Breast epithelium (tissue), 4 donors: ENCODE measurements at regions of chr2 and their contacts with region 1.

Region 1: GRCh38 chr2:230068016-230068650 is 591 bp downstream of the SLC16A14 start:
- DNase-seq: no peak
- H3K4me3 ChIP-seq: peak overlapping the region; percentile 60 to 77 (median 71)
- H3K27ac ChIP-seq: peak overlapping the region; percentile 62 to 91
- H3K4me1 ChIP-seq: no peaks in the 10 kb centered on the region
- H3K27me3 ChIP-seq: no peaks in the 10 kb centered on the region
- CTCF ChIP-seq: no peak
- POLR2A ChIP-seq: no peak

Region 2: DNA sequence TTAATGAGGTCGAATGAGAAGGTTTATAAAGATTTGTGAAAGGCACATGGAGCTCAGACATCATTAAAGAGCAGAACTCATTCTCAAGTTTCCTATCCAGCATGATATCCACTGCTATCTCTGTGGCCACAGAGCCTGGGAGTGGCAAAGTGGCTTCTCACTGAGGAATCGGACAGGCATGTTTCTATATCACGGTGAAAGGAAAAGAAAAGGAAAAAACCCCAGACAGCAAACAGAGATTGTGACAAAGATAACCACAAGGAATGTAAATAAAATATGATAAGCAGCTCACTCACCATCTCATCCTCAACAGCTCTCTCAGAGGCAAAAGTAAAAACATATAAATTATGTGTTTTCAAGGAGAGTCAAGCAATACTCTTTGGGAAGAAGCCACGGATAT is 799.5 kb before region 1 on chr2:
- intact Hi-C with region 1: no loop called
- DNase-seq: no peak
- H3K4me3 ChIP-seq: peak overlapping the region; percentile 63 to 94 (median 84)
- H3K27ac ChIP-seq: no peak overlapping the region
- H3K4me1 ChIP-seq: no peaks in the 10 kb centered on the region
- H3K27me3 ChIP-seq: no peaks in the 10 kb centered on the region
- CTCF ChIP-seq: no peak
- POLR2A ChIP-seq: no peak

Region 3: DNA sequence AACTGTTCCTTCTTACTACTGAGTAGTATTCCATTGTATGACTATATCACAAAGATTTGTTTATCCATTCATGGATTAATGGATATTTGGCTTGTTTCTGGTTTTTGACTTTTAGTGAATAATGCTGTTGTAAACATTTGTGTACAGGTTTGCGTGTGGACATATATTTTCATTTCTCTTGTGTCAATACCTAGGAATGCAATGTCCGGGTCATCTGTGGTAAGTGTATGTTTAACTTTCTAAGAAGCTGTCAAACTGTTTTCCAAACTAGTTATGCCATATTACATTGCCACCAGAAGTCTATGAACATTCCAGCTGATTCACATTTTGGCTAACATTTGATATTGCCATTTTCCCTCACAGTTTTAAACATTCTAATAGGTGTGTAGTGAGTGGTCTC is 29.7 kb after region 1 on chr2:
- intact Hi-C with region 1: loop called (anchors 2 kb)
- DNase-seq: no peak
- H3K4me3 ChIP-seq: no peak overlapping the region
- H3K27ac ChIP-seq: no peak overlapping the region
- H3K4me1 ChIP-seq: no peaks in the 10 kb centered on the region
- H3K27me3 ChIP-seq: no peaks in the 10 kb centered on the region
- CTCF ChIP-seq: no peak
- POLR2A ChIP-seq: no peak